ENCODE measurements at regions of chr2 and their contacts with region 1.

Region 1: GRCh38 chr2:218257390-218257981 is 3.3 kb upstream of the GPBAR1 start:
- DNase-seq: peak; percentile 67
- ATAC-seq: peak; percentile 89
- H3K4me3 Mint-ChIP-seq: peak overlapping the region; percentile 73
- H3K27ac Mint-ChIP-seq: peak overlapping the region; percentile 92
- H3K4me1 Mint-ChIP-seq: peaks cover 70% of the 10 kb centered on the region
- H3K27me3 Mint-ChIP-seq: no peaks in the 10 kb centered on the region
- CTCF ChIP-seq: no peak

Region 2: DNA sequence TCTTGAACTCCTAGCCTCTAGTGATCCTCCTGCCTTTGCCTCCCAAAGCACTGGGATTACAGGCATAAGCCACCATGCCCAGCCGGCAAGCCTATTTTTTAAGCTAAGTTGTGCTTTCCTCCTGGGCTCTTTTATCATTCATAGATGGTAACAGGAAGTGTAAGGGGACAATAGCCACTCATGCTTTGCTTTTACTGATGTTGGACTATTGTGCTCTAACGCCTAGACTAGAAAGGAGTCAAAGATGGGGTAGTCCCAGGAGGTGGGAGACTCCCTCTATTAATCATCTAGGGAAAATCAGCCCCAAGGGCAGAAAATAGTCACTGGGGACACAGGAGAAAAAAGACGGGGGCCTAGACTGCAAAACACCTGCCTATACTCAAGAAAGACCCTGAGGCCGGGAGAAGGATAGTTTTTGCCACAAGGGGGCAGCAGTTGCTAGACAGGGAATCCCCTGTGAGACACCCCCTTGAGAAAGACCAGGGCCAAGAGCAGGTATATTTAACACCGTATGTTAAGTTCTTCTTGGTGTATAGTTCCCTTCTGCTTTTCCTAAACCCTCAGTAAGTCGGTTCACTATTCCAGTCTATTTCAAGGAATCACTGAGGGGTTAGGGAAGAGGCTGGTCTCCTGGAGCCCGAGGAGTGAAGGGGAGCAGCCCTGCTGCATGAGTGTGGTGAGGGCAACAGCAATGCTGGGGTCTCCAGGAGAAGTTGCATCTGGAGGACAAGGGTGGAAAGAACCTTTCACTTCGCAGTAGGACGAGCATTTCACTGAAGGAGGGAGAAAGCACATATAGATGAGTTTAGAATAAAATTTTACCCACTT is 88.6 kb before region 1 on chr2:
- CTCF ChIA-PET with region 1: interaction called, 11 read pairs
- POLR2A ChIA-PET with region 1: no interaction called
- intact Hi-C with region 1: loop called (anchors 1 kb)
- DNase-seq: peak; percentile 41
- ATAC-seq: peak; percentile 79
- H3K4me3 Mint-ChIP-seq: no peak overlapping the region
- H3K27ac Mint-ChIP-seq: no peak overlapping the region
- H3K4me1 Mint-ChIP-seq: peaks cover 25% of the 10 kb centered on the region
- H3K27me3 Mint-ChIP-seq: peaks cover 18% of the 10 kb centered on the region
- CTCF ChIP-seq: peak; percentile 30

Region 3: GRCh38 chr2:218229239-218229638 is 28.2 kb before region 1 on chr2:
- CTCF ChIA-PET with region 1: interaction called, 21 read pairs
- POLR2A ChIA-PET with region 1: interaction called, 31 read pairs
- intact Hi-C with region 1: loop called (anchors 1 kb)
- DNase-seq: no peak
- ATAC-seq: peak; percentile 91
- H3K4me3 Mint-ChIP-seq: peak overlapping the region; percentile 56
- H3K27ac Mint-ChIP-seq: peak overlapping the region; percentile 87
- H3K4me1 Mint-ChIP-seq: peaks cover 67% of the 10 kb centered on the region
- H3K27me3 Mint-ChIP-seq: no peaks in the 10 kb centered on the region
- CTCF ChIP-seq: no peak

Region 4: DNA sequence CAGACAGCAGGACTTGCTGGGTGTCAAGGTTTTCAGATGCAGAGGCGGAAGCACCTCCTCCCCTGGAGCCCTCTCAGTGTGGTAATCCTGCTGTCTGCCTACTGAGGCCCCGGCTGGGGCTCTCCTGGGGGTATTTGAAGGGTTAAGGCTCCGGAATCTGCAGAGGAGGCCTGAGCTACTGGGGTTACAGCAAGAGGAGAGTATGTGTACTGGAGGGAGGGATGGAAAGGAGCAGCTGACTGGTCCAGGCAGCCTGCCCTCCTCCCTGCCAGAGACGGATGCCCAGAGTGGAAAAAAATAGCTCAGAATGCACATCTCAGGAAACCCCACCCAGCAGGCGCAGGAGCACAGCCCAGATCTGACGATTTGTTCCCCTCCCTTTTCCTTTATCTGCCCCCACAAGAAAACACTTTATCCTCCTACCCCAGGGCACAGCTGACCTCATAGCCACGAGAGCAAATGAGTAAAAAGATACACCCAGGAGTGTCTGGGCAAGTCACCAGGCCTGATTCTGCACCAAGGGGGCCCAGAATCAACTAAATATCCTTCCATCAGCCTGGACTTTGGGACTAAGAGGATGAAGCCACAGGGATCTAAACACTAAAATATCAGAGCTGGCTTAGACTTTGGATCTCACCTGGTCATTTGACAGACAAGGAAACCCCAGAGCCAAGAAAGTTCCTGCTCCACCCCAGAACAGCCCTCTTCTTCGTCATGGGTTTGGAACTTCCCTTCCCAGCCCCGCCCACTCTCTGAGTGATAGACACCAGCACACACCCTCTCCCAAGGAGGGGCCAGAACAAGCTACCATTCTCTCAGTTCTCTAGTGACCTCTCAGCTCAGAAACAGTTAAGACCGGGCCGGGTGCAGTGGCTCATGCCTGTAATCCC is 29.3 kb after region 1 on chr2:
- CTCF ChIA-PET with region 1: interaction called, 3 read pairs
- POLR2A ChIA-PET with region 1: interaction called, 9 read pairs
- intact Hi-C with region 1: loop called (anchors 1 kb)
- DNase-seq: peak; percentile 63
- ATAC-seq: peak; percentile 73
- H3K4me3 Mint-ChIP-seq: peak overlapping the region; percentile 77
- H3K27ac Mint-ChIP-seq: peak overlapping the region; percentile 94
- H3K4me1 Mint-ChIP-seq: peaks cover 91% of the 10 kb centered on the region
- H3K27me3 Mint-ChIP-seq: no peaks in the 10 kb centered on the region
- CTCF ChIP-seq: no peak